ENCODE measurements at regions of chr9 and their contacts with region 1.

Region 1: GRCh38 chr9:4814913-4815312 is 22.2 kb downstream of the RCL1 start:
- DNase-seq: no peak
- H3K4me3 ChIP-seq: no peak overlapping the region
- H3K27ac ChIP-seq: no peak overlapping the region
- H3K4me1 ChIP-seq: 0 out of 2 replicates have a peak, but pooled peaks cover 7% of the 10 kb centered on the region
- H3K27me3 ChIP-seq: no peaks in the 10 kb centered on the region
- CTCF ChIP-seq: no peak

Region 2: DNA sequence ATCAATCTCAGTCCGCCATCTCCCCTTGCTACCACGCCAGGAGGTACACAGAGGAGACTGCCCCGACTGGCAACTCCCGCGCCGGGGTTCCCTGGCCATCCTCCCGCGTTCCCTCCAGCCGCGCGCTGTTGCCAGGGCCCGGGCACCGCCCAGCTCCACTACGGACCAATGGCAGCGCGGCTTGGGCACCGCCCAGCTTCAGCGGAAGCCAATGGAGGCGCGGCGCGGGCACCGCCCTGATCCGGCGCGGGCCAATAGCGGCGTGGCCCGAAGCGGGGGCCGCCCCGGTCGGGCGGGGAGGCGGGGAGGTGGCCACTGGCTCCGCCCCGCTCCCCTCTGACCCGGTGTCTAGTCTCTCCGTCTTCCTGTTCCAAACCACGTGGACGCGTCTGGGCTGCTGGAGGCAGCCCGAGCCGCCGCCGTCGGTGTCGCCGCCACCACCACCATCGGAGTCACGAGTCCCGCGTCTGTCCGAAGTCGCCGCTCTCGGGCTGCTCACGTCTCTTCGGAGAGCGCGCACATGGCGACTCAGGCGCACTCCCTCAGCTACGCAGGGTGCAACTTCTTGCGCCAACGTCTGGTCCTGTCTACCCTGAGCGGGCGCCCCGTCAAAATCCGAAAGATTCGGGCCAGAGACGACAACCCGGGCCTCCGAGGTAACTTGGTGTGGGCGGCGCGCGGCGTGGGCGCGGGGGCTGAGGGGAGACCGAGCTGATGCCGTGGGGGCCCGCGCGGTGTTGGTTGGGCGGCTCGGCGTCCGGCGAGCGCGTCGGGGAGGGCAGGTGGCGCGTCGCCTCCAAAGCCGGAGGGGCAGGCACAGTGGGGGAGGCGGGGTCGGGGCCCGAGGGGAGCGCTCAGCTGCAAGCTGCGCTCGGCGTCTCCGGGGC is 22.1 kb before region 1 on chr9 and contains the start of gene RCL1:
- CTCF ChIA-PET with region 1: interaction called, 10 read pairs
- POLR2A ChIA-PET with region 1: no interaction called
- intact Hi-C with region 1: no loop called
- DNase-seq: peak; percentile 77 to 94
- H3K4me3 ChIP-seq: peak within 1 kb of the TSS; percentile 94
- H3K27ac ChIP-seq: peak within 1 kb of the TSS; percentile 69
- H3K4me1 ChIP-seq: peaks cover 10% of the 10 kb centered on the region; the same call in 1 of the 2 replicates
- H3K27me3 ChIP-seq: no peaks in the 10 kb centered on the region
- CTCF ChIP-seq: no peak
- total RNA-seq, gene RCL1: 8.5 and 9.5 TPM in 2 replicates